Panc1 (cell line): ENCODE measurements at regions of chr10 and their contacts with region 1.

Region 1: GRCh38 chr10:124049484-124049883 is 43.9 kb downstream of the CHST15 start:
- DNase-seq: peak; percentile 35
- ATAC-seq: peak; percentile 65
- H3K4me3 ChIP-seq: no peak overlapping the region
- H3K27ac ChIP-seq: no peak overlapping the region
- H3K4me1 ChIP-seq: no peaks in the 10 kb centered on the region
- H3K27me3 ChIP-seq: no peaks in the 10 kb centered on the region
- CTCF ChIP-seq: no peak

Region 2: DNA sequence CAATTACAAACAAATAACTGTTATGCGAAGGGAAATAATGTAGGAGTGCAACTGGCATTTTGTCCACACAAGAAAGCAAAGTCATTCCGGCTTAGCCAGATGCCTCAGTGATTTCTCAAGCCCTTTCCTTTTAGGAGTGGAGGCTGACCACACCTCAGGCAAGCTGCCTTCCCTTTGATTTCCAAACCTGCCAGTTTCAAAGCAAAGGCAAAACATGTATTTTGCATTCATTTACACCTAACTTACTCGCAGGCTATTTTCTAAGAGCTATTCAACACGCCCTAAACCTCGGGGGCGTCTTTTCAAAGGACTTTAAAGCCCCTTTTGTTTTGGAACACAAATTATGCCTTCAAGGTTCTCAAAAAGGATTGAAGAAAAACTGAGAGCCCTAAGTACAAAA is 267.5 kb before region 1 on chr10:
- CTCF ChIA-PET with region 1: no interaction called
- POLR2A ChIA-PET with region 1: no interaction called
- in situ Hi-C with region 1: no loop called
- intact Hi-C with region 1: no loop called
- DNase-seq: no peak
- ATAC-seq: no peak
- H3K4me3 ChIP-seq: no peak overlapping the region
- H3K27ac ChIP-seq: no peak overlapping the region
- H3K4me1 ChIP-seq: no peaks in the 10 kb centered on the region
- H3K27me3 ChIP-seq: peaks cover 48% of the 10 kb centered on the region
- CTCF ChIP-seq: no peak

Region 3: DNA sequence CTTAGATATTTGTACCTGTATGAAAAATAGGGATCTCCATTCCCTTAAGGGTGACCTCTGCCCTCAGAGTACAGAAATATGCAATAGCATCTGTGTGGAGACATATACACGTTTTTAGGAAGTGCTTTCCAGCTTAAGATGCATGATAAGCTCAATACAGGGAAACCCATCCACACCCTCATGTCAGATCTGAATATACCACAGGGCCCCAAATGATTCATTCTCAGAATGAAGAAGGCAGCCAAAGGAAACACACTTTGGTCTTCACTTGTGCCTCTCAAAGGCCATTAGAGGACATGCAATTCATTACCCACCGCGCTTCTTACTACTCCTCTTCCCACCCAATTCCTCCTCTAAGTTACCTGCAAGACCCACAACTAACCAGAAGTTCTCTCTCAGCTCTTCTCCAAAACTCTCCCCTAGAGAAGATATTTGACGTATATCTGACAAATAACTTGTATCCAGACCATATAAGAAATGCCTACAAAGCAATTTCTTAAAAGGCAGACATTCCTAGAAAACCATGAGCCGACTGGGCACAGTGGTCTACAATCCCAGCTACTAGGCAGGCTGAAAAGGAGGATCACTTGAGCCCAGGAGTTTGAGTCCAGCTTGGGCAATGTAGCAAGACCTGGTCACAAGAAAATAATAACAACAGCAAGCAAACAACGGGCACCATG is 266.2 kb after region 1 on chr10:
- CTCF ChIA-PET with region 1: no interaction called
- POLR2A ChIA-PET with region 1: interaction called, 11 read pairs
- in situ Hi-C with region 1: no loop called
- intact Hi-C with region 1: no loop called
- DNase-seq: no peak
- ATAC-seq: no peak
- H3K4me3 ChIP-seq: no peak overlapping the region
- H3K27ac ChIP-seq: no peak overlapping the region
- H3K4me1 ChIP-seq: no peaks in the 10 kb centered on the region
- H3K27me3 ChIP-seq: no peaks in the 10 kb centered on the region; the same call in 1 of the 2 replicates
- CTCF ChIP-seq: no peak